B cell (primary cell): ENCODE measurements at regions of chr3 and their contacts with region 1.

Region 1: DNA sequence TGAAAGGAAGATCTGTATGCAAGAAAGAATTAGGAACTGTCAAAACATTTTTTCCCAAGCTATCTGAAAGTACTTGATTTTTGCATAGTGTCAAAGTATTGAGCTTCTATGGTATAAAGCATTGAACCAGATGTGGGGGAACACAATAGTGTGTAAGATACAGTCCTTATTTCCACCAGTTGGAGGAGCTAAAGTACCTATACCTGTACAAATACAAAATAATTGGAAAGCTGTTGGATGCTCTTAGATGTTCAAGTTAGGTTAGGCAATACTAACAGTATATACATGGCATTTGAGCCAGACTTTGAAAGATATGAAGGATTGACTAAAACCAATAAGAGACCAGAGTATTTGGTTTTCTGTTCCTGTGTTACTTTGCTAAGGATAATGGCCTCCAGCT is 148.3 kb downstream of the B3GALNT1 start:
- DNase-seq: peak; percentile 19
- ATAC-seq: no peak
- H3K4me3 ChIP-seq: no peak overlapping the region
- H3K4me3 Mint-ChIP-seq: no peak overlapping the region
- H3K27ac ChIP-seq: no peak overlapping the region
- H3K27ac Mint-ChIP-seq: no peak overlapping the region
- H3K4me1 ChIP-seq: no peaks in the 10 kb centered on the region
- H3K4me1 Mint-ChIP-seq: no peaks in the 10 kb centered on the region
- H3K27me3 ChIP-seq: no peaks in the 10 kb centered on the region
- H3K27me3 Mint-ChIP-seq: no peaks in the 10 kb centered on the region
- CTCF ChIP-seq: peak; percentile 41

Region 2: DNA sequence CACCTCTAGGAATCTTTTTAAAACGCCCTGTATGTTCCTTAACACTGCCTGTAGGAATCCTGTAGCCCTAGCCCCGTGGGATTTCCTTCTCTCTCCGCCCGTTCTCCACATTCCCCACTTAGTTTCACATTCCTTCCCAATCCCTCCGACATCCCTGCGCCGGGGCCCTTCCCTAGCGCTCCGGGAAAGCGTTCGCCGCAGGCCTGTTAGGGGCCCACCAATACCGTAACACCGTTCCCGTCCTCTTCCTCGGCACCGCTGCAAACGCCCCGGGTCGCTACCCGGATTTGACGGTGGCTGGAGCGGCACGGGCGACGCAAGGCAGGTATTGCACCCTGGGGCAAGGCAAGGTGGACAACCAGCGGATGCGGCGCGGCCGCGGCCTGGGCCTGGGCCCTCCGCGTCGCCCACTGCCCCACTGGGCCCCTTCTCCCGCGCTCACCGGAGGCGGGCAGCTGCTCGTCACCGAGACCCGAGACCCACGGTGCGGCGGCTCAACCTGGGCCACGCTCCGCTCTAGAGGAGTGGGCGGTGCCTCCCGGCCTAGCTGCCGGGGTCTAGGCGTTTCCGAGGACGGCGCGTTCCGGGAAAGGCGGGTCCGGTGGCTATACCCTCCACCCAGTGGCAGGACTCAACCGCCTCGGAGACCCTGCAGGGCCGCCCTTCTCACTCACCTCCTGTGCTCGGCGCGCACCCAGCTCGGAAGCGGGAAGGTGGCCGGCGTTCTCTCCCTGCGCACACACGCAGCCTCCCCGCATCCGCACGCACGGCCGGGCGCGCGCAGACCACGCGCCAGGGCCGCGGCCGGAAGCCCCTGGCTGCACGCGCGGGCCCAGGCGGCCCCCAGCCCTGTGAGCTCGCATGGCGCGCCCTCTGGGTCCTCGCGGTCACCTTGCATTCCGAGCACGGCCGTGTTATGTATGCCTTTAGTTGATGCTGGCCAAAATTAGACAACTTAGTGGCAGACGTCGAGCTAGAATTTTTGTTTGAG is 148.1 kb after region 1 on chr3 and contains the start of gene B3GALNT1:
- CTCF ChIA-PET with region 1: interaction called, 7 read pairs
- POLR2A ChIA-PET with region 1: no interaction called
- intact Hi-C with region 1: loop called (anchors 10 kb)
- DNase-seq: peak; percentile 50
- ATAC-seq: peak; percentile 81
- H3K4me3 ChIP-seq: peak within 1 kb of the TSS; percentile 21 to 70 (median 53)
- H3K4me3 Mint-ChIP-seq: peak within 1 kb of the TSS; percentile 83
- H3K27ac ChIP-seq: no peak within 1 kb of the TSS
- H3K27ac Mint-ChIP-seq: peak within 1 kb of the TSS; percentile 7
- H3K4me1 ChIP-seq: peaks cover 6 to 10% of the 10 kb centered on the region in 2 donors
- H3K4me1 Mint-ChIP-seq: peaks cover 12% of the 10 kb centered on the region
- H3K27me3 ChIP-seq: peaks cover 0 to 6% (median 2%) of the 10 kb centered on the region in 4 experiments
- H3K27me3 Mint-ChIP-seq: peaks cover 11% of the 10 kb centered on the region
- CTCF ChIP-seq: no peak
- total RNA-seq, gene B3GALNT1: 6.4 and 9.8 TPM in 2 replicates

Region 3: DNA sequence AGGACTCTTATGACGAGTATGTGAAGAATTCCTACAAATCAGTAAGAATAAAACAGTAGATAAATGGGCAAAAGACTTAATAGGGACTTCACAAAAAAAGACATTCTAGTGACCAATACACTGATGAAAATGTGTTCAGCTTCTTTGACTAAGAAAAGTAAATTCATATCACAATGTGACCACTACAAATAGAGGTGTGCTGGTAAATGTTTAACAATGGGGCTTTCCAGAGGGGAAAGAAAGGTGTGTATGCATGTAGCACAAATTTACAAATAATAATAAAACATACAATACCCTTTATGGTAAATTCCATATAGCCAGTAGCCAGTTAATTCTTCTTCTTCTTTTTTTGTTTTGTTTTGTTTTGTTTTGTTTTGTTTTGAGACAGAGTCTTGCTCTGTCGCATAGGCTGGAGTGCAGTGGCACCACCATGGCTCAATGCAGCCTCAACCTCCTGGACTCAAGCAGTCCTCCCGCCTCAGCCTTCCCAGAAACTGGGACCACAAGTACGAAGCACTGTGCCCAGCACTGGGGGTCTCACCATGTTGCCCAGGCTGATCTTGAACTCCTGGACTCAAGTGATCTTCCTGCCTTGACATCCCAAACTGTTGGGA is 246.8 kb after region 1 on chr3:
- CTCF ChIA-PET with region 1: no interaction called
- POLR2A ChIA-PET with region 1: no interaction called
- intact Hi-C with region 1: loop called (anchors 5 kb)
- DNase-seq: no peak
- ATAC-seq: no peak
- H3K4me3 ChIP-seq: no peak overlapping the region
- H3K4me3 Mint-ChIP-seq: no peak overlapping the region
- H3K27ac ChIP-seq: no peak overlapping the region
- H3K27ac Mint-ChIP-seq: no peak overlapping the region
- H3K4me1 ChIP-seq: no peaks in the 10 kb centered on the region
- H3K4me1 Mint-ChIP-seq: no peaks in the 10 kb centered on the region
- H3K27me3 ChIP-seq: no peaks in the 10 kb centered on the region
- H3K27me3 Mint-ChIP-seq: no peaks in the 10 kb centered on the region
- CTCF ChIP-seq: no peak

Region 4: DNA sequence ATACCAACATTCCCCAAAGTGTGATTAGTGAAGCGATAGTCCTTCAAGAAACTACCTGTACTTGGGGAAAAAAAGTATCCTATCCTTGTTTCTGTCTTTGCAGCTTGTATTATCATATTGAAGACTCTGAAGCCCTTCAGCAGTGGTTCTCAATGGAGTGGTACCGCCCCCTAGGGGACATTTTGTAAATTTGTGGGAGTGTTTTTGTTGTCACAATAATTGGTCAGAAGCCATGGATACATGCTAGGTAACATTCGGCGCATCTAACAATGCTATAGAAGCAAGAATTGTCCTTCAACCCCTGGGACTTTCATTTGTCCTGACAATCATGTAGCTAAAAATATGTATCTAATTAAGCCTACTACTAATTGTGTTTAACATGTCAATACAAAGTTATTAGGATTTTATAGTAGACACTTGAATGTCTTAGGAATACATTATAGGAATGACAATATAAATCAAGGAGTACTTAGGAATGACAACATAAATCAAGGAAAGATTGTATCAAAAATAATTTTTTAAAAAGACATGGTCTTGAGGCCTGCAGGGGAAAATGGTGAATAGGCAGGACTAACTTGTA is 318.0 kb after region 1 on chr3:
- CTCF ChIA-PET with region 1: interaction called, 18 read pairs
- POLR2A ChIA-PET with region 1: no interaction called
- intact Hi-C with region 1: no loop called
- DNase-seq: peak; percentile 47
- ATAC-seq: no peak
- H3K4me3 ChIP-seq: no peak overlapping the region
- H3K4me3 Mint-ChIP-seq: no peak overlapping the region
- H3K27ac ChIP-seq: no peak overlapping the region
- H3K27ac Mint-ChIP-seq: no peak overlapping the region
- H3K4me1 ChIP-seq: no peaks in the 10 kb centered on the region
- H3K4me1 Mint-ChIP-seq: no peaks in the 10 kb centered on the region
- H3K27me3 ChIP-seq: no peaks in the 10 kb centered on the region
- H3K27me3 Mint-ChIP-seq: no peaks in the 10 kb centered on the region
- CTCF ChIP-seq: peak; percentile 64